Activated T-helper 1 cell treated with anti-CD3 and anti-CD28 coated beads, Interleukin-12 subunit alpha, Interleukin-12 subunit beta, Interleukin-2, Interleukin-4 antibody, amounts not matched to agents 30 ng/mL and 10 ng/mL and 1 ng/mL, durations not matched to agents 14 hours and 24 hours and 36 hours (primary cell): ENCODE measurements at regions of chr18 and their contacts with region 1.

Region 1: GRCh38 chr18:2655178-2655953 is at the start of gene SMCHD1:
- DNase-seq: peak; percentile 86
- H3K4me3 Mint-ChIP-seq: peak within 1 kb of the TSS; percentile 88
- H3K27ac Mint-ChIP-seq: peak within 1 kb of the TSS; percentile 96
- H3K4me1 Mint-ChIP-seq: peaks cover 36% of the 10 kb centered on the region
- H3K27me3 Mint-ChIP-seq: peaks cover 2% of the 10 kb centered on the region
- total RNA-seq, gene SMCHD1: 98.6 and 112 TPM in 2 replicates

Region 2: DNA sequence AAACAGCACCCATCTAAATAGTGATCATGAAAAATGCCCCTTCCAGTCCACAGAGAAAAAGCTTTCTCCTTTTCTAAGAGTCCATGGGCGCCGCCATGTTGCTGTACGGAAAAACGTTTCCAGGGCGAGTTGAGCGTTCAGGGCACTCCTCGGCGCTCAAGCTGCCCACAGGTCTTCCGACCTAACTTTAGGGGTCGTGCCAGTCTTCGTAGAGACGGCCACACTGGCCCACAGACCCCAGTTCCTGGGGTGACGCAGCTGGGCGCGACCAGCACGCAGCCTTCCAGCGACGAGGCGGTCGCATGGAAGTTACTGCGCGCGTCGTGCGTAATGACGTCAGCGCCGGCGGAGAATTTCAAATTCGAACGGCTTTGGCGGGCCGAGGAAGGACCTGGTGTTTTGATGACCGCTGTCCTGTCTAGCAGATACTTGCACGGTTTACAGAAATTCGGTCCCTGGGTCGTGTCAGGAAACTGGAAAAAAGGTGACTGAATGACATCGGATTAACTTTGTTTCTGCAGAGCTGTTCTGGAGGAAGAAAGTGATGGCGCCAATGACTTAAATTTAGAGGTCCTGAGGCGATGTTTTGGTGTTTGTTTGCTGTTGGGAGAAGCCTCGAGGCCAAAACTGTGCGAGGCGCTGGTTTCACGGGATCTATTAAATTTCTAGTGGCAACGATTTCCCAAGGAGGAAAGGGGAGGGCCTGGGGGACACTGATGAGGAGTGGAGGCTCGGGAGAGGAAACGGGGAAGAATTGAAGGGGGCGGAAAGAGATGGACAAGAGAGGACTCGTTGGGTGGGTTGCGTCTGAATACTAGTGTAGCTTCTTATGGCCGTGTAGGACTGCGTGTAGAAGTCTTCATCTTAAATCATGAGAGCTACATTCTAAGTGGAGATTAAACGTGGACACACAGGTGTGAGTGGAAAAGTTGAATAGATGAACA is 83.9 kb before region 1 on chr18 and contains the starts of genes METTL4 and NDC80:
- intact Hi-C with region 1: loop called (anchors 1 kb)
- DNase-seq: peak; percentile 79
- H3K4me3 Mint-ChIP-seq: peak within 1 kb of the TSS; percentile 97
- H3K27ac Mint-ChIP-seq: peak within 1 kb of the TSS; percentile 97
- H3K4me1 Mint-ChIP-seq: peaks cover 66% of the 10 kb centered on the region
- H3K27me3 Mint-ChIP-seq: no peaks in the 10 kb centered on the region
- total RNA-seq, gene METTL4: 15.0 and 26.2 TPM in 2 replicates
- total RNA-seq, gene NDC80: 41.2 and 42.6 TPM in 2 replicates

Region 3: GRCh38 chr18:2606335-2606734 is 49.0 kb before region 1 on chr18:
- intact Hi-C with region 1: loop called (anchors 1 kb)
- DNase-seq: no peak
- H3K4me3 Mint-ChIP-seq: peak overlapping the region; percentile 75
- H3K27ac Mint-ChIP-seq: peak overlapping the region; percentile 87
- H3K4me1 Mint-ChIP-seq: peaks cover 69% of the 10 kb centered on the region
- H3K27me3 Mint-ChIP-seq: no peaks in the 10 kb centered on the region

Region 4: GRCh38 chr18:2958819-2959298 is 303.5 kb after region 1 on chr18:
- intact Hi-C with region 1: loop called (anchors 2 kb)
- DNase-seq: peak; percentile 46
- H3K4me3 Mint-ChIP-seq: peak overlapping the region; percentile 81
- H3K27ac Mint-ChIP-seq: peak overlapping the region; percentile 99
- H3K4me1 Mint-ChIP-seq: peaks cover 93% of the 10 kb centered on the region
- H3K27me3 Mint-ChIP-seq: no peaks in the 10 kb centered on the region

Region 5: DNA sequence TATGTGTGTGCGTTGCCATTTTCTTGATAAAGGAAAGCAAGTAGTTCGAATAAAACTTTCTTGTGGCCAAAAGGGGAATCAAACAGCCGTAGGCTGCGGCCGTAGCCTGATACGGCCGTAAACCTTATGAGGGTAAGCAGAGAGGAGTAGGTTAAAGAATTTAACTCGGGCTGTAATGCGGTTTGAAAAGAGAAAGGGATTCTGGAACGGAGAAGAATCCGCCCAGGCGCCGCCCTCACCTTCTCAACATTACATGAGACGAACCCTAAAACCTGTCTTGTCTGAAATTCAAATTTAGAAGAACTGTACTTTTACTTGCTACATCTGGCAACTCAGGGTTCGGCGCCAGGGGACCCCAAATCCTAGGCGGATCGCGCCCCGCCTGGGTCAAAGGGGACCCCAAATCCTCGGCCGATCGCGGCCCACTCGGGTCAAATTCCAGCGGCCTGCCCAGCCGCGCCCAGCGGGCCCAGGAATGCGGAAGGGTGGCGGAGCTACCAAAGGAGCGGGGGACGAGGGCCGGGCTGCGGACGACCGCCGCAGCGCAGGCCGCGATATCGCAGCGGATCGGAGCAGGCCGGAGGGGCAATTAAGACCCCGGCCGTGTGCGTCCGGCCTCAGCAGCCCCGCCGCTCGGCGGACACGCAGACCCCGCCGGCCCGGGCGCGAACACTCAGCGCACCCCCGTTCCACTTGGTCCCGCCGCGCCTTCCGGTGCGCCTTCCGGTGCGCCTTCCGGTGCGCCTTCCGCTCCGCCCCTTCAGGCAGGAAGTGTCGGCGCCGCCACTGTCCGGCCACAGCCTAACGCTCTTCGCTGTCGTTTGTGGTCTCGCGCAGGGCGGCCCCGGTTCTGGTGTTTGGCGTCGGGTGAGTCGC is 606.2 kb after region 1 on chr18 and contains the start of gene MYL12B:
- intact Hi-C with region 1: loop called (anchors 5 kb)
- DNase-seq: peak; percentile 75
- H3K4me3 Mint-ChIP-seq: peak within 1 kb of the TSS; percentile 93
- H3K27ac Mint-ChIP-seq: peak within 1 kb of the TSS; percentile 98
- H3K4me1 Mint-ChIP-seq: peaks cover 82% of the 10 kb centered on the region
- H3K27me3 Mint-ChIP-seq: no peaks in the 10 kb centered on the region
- total RNA-seq, gene MYL12B: 234 and 235 TPM in 2 replicates